Activated T-helper 2 cell treated with anti-CD3 and anti-CD28 coated beads, Interferon-gamma antibody, Interleukin-2, Interleukin-4, amounts not matched to agents 10 μg/mL and 5 μg/mL and 100 μg/mL, durations not matched to agents 14 hours and 24 hours and 36 hours (primary cell): ENCODE measurements at regions of chr10 and their contacts with region 1.

Region 1: DNA sequence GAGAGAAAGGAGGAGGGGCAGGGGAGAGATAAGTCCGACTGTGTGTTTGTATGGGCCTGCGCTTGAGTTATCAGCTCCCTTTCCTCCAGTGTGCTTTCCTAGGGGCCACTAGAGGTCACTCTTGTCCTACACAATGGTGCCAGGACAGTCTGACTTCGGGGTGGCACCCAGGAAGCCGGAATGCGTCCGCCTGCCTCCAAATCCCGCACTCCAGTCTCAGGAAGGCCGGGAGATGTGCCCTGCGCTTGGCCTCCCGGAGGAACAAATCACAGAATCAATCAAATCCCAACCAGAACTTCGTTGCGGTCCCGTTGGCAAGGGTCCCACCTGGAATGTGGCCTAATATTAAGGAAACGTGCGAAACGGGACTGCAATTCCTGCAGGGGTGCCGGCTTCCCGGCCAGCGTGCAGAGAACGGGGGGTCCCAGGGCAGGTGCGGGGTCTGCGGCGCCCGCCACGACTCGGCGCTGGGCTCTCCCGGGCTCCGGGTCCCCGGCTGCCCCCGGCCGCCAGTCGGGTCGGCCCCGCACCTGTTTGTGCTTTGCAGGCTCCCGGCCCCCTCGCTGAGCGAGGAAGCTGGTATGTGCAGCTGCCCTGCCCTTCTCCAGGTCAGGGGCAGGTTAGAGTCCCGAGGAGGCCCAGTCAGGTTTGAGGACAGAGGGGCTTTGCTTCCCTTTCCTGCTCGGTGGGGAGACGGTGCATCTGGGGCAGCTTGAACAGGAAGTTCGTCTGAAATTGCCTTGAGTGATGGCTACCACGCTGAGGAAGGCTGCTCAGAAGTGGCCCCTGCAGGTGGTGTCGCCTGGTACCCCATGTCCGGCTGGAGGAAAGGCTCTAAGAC is 21.0 kb upstream of the HPS1 start:
- DNase-seq: peak; percentile 45
- H3K4me3 Mint-ChIP-seq: peak overlapping the region; percentile 85
- H3K27ac Mint-ChIP-seq: no peak overlapping the region
- H3K4me1 Mint-ChIP-seq: peaks cover 13% of the 10 kb centered on the region
- H3K27me3 Mint-ChIP-seq: peaks cover 39% of the 10 kb centered on the region

Region 2: GRCh38 chr10:98170249-98171117 is 297.2 kb before region 1 on chr10:
- intact Hi-C with region 1: no loop called
- DNase-seq: no peak
- H3K4me3 Mint-ChIP-seq: no peak overlapping the region
- H3K27ac Mint-ChIP-seq: no peak overlapping the region
- H3K4me1 Mint-ChIP-seq: peaks cover 15% of the 10 kb centered on the region
- H3K27me3 Mint-ChIP-seq: no peaks in the 10 kb centered on the region

Region 3: GRCh38 chr10:98511876-98512275 is 44.1 kb after region 1 on chr10:
- intact Hi-C with region 1: no loop called
- DNase-seq: no peak
- H3K4me3 Mint-ChIP-seq: no peak overlapping the region
- H3K27ac Mint-ChIP-seq: no peak overlapping the region
- H3K4me1 Mint-ChIP-seq: no peaks in the 10 kb centered on the region
- H3K27me3 Mint-ChIP-seq: peaks cover 4% of the 10 kb centered on the region

Region 4: DNA sequence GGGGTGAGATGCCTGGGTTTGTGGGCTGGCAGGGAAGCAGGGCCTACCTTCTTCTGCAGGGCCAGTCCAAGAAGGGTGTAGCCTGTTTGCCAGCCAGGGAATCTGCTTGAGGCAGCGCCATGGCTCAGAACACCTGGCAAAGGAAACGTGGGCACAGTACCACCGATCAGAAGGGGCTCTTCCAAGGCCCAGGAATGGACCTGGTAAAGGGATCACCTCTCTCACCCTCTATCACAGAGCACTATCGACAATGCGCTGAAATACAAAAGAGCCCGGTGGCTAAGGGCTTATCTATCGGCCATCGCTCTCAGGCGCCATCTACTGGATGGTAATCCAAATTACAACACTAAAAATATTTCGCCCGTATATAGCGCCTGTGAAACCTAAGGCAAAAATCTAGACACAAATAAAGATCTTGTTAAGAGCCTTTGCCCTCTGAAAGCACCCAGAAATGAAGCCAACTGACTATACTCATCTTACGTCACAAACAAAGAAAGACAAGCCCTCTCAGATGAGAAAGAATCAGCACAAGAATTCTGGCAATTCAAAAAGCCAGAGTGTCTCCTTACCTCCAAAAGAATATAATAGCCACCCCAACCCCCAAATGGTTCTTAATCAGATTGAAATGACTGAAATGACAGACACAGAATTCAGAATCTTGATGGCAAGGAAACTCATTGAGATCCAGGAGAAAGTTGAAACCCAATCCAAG is 196.8 kb after region 1 on chr10:
- intact Hi-C with region 1: loop called (anchors 1 kb)
- DNase-seq: peak; percentile 11
- H3K4me3 Mint-ChIP-seq: no peak overlapping the region
- H3K27ac Mint-ChIP-seq: no peak overlapping the region
- H3K4me1 Mint-ChIP-seq: no peaks in the 10 kb centered on the region
- H3K27me3 Mint-ChIP-seq: peaks cover 7% of the 10 kb centered on the region

Region 5: DNA sequence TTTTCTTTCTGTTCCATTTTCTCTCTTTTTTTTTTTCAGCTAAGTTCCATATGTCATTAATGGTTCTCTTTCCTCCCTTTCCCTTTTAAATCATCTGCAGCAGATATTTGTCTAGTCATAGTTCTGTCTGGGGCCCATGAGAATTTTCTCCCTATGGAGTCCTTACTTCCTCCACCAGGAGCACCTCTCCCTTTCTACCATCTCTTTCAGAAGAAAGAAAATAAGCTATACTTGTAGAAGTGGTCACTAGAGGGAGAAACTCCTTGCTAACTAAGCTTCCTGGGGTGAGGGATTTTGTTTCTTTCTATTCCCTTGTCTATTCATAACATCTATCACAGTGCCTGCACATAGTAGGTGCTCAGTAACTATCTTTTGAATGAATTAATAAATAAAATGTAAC is 209.2 kb after region 1 on chr10:
- intact Hi-C with region 1: no loop called
- DNase-seq: no peak
- H3K4me3 Mint-ChIP-seq: no peak overlapping the region
- H3K27ac Mint-ChIP-seq: no peak overlapping the region
- H3K4me1 Mint-ChIP-seq: no peaks in the 10 kb centered on the region
- H3K27me3 Mint-ChIP-seq: peaks cover 5% of the 10 kb centered on the region

Region 6: GRCh38 chr10:99042051-99042771 is 574.5 kb after region 1 on chr10:
- intact Hi-C with region 1: loop called (anchors 5 kb)
- DNase-seq: no peak
- H3K4me3 Mint-ChIP-seq: no peak overlapping the region
- H3K27ac Mint-ChIP-seq: no peak overlapping the region
- H3K4me1 Mint-ChIP-seq: no peaks in the 10 kb centered on the region
- H3K27me3 Mint-ChIP-seq: no peaks in the 10 kb centered on the region